HEK293T (cell line): ENCODE measurements at regions of chr6 and their contacts with region 1.

Region 1: GRCh38 chr6:160455541-160456213 is 107.5 kb downstream of the SLC22A3 start:
- DNase-seq: peak; percentile 81

Region 2: DNA sequence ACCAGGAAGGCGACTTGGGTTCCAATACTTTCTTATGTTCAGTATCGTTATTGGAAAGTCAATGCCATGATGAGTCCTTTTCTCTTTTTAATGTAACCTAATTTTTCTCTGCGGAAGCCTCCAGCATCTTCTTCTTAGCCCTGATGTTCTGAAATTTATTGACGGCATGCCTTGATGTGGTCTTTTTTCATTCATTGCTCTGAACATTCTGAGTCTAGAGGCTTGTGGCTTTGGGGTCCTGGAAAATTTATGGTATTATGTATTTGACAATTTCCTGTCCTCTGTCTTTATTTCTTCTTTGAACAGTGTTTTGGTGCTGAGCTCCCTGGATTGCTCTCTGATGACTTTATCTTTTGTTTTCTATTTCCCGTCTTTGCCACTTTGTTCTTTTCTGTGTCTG is 593.6 kb before region 1 on chr6:
- CTCF ChIA-PET with region 1: interaction called, 15 read pairs
- POLR2A ChIA-PET with region 1: no interaction called
- DNase-seq: no peak

Region 3: GRCh38 chr6:160408528-160408927 is 47.1 kb before region 1 on chr6:
- CTCF ChIA-PET with region 1: no interaction called
- POLR2A ChIA-PET with region 1: no interaction called
- DNase-seq: no peak